ENCODE measurements at regions of chr1 and their contacts with region 1.

Region 1: DNA sequence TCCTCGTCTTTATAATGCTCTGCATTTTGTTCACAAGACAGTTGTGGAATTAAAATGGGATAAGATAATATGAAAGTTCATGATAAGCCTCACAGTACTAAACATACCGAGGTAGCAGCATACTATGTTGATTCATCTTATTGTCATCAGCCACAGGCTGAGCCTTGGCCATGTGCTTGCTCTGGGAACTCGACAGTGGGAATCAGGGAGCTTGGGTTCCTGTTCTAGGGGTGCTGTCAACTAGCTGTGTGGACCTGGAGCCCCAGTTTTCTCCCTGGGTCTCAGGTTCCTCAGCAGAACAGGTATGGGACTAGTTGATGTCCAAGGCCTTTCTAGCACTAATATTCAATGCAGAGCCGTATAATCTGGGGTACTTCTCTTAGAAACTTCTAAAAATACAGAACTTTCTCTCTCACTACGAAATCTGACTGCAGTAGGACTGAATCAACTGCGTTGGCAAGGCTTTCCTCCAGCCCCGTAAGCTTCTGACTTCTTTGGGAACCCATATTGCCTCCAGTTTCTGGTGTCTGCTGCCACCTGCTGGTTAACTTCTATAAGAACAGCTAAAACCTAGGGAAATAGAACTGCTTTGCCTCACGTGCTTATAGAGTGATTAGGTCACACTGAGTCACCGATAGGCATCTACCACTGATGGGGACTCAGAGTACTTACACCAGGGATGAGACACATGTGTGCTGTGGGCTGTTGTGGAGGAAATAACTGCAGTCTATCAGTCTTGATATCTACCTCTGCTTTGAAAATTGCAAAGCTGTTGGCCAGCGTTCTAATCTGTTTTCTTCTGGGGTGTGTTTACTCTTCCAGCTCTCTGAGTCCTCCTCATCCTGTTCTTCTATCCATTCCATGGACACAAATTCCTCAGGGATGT is 110.9 kb downstream of the RGL1 start:
- DNase-seq: peak; percentile 59
- CTCF ChIP-seq: peak; percentile 65

Region 2: DNA sequence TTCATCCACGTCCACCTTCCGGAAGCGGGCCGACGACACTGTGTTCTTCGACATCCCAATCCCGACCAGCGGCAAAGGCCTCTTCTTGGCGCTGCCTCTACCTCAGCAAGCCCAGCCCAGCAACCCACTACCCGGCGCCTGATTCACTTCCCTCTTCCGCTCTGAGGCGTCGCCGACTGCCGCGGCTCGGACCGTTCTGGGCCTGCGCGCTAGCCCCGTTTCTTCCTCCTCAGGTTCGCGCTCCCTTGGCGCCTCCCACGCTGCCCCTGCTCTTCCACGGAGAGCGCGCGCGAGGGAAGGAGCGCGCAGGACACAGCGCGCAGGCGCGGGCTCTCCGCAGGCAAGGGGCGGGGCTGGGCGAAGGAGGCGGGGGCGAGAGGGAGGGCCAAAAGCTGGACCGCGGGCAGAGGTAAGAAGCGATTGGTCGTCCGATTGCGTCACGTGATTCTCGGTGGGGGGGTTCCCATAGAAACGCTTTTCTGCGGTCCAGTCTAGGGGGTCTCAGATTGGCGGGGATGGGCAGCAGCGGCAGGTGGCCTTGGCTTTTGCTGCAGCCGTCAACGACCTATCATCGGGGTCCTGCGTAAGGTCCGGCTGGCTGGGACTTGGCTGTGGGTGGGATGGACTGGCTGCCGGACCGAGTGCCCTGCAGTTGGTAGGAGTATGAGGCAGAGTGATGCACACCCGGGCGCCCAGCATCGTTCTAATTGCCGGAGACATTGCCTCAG is 280.1 kb before region 1 on chr1 and contains the start of gene ARPC5:
- CTCF ChIA-PET with region 1: interaction called, 47 read pairs
- POLR2A ChIA-PET with region 1: no interaction called
- DNase-seq: peak; percentile 96
- CTCF ChIP-seq: no peak

Region 3: DNA sequence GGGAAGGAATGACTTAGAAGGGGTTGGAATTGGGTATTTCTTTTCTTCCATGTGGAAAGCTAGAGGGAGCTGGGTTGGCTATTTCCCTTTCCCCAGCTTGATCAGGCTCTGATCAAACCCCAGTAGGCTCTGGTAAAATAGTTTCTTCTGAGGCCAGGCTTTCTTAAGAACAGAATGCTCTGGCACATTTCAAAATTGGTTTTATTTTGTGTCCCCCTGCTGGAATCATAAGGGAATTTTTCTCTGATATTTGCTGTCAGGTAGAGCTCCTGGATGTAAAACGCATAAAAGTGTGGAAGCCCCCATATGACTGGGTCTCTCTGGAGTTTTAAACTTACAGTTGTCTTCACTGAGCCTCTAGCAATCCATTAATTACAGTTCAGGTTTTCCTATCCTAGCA is 245.7 kb before region 1 on chr1:
- CTCF ChIA-PET with region 1: interaction called, 11 read pairs
- POLR2A ChIA-PET with region 1: no interaction called
- DNase-seq: no peak
- CTCF ChIP-seq: no peak

Region 4: DNA sequence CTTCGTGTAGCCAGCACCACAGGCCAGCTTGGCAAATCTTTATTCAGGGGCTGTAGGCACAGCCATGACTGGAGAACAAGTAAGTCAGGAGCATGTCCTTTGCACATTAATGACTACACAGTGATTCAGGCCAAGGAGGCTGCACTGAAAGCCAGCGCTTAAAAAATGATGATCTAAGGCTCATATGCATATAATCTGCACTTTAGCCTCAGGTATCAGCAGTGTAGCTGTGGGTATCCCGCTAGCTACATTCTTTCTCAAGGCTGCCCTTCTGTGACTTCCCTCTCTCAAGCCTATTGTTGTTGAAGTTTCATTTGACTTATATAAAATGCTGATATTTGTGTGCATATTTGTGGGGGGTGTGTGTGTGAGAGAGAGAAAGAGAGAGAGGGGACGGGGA is 173.5 kb before region 1 on chr1:
- CTCF ChIA-PET with region 1: no interaction called
- POLR2A ChIA-PET with region 1: no interaction called
- DNase-seq: no peak
- CTCF ChIP-seq: no peak

Region 5: DNA sequence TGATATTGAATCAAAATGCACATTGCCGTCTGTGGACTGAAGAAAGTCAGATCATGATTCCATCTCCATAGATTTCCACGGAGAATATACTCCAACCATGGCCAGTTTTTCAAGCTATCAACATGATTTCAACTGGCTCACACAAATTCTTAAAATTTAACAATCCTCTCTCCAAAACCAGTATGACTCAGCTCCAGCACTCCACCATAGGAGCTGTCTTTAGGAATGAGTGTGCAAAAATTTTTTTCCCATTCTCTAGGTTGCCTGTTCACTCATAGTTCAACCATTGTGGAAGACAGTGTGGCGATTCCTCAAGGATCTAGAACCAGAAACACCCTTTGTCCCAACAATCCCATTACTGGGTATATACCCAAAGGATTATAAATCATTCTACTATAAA is 70.2 kb before region 1 on chr1:
- CTCF ChIA-PET with region 1: interaction called, 10 read pairs
- POLR2A ChIA-PET with region 1: no interaction called
- DNase-seq: no peak
- CTCF ChIP-seq: no peak

Region 6: DNA sequence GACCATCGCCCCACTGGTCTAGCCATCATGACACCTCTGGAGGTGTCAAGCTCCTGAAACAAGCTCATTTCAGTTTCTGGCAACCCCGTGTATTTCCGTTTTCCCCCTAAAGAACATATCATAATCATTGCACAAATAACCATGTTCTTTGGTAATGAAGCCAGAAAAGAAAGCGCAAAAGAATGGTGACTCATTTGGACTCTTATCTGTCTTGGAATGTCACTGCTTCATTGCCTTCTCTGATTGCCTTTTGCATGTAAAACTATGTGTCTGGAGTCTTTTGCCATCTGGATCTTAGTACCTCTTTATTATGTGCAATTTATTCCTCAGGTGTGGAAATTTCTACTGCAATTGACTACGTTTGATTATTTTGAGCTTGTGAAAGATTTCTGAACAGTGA is 11.1 kb after region 1 on chr1:
- CTCF ChIA-PET with region 1: interaction called, 31 read pairs
- POLR2A ChIA-PET with region 1: no interaction called
- DNase-seq: no peak
- CTCF ChIP-seq: no peak

Region 7: DNA sequence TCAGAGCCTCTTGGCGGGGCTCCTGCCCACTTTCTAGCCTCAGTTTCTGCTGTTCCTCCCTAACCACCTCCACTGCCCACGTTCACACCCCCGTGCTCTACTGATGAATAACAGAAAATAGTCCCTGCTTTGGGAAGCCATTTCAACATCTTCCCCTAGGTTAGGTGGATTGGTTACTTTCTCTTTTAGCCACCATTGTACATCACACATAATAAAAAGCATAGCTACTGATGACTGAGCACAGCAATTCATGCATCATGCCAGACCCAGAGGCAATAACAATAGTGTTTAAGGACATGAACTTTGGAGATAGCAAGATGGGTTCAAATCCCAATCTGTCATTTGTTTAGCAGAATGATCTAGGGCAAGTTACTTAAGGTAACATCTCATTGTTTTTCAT is 47.0 kb after region 1 on chr1:
- CTCF ChIA-PET with region 1: no interaction called
- POLR2A ChIA-PET with region 1: no interaction called
- DNase-seq: no peak
- CTCF ChIP-seq: no peak